Activated CD4-positive, alpha-beta T cell treated with anti-CD3 and anti-CD28 coated beads, Interleukin-2, amount 10 ng/mL, durations not matched to agents 24 days and 14 days (primary cell): ENCODE measurements at regions of chr1 and their contacts with region 1.

Region 1: GRCh38 chr1:221994274-221994698 is 252.4 kb upstream of the DUSP10 start:
- DNase-seq: peak; percentile 65
- H3K4me3 Mint-ChIP-seq: peak overlapping the region; percentile 23
- H3K27ac Mint-ChIP-seq: peak overlapping the region; percentile 92
- H3K4me1 Mint-ChIP-seq: peaks cover 26% of the 10 kb centered on the region
- H3K27me3 Mint-ChIP-seq: no peaks in the 10 kb centered on the region

Region 2: GRCh38 chr1:221637641-221638041 is 356.6 kb before region 1 on chr1:
- intact Hi-C with region 1: no loop called
- DNase-seq: no peak
- H3K4me3 Mint-ChIP-seq: no peak overlapping the region
- H3K27ac Mint-ChIP-seq: no peak overlapping the region
- H3K4me1 Mint-ChIP-seq: no peaks in the 10 kb centered on the region
- H3K27me3 Mint-ChIP-seq: peaks cover 2% of the 10 kb centered on the region

Region 3: DNA sequence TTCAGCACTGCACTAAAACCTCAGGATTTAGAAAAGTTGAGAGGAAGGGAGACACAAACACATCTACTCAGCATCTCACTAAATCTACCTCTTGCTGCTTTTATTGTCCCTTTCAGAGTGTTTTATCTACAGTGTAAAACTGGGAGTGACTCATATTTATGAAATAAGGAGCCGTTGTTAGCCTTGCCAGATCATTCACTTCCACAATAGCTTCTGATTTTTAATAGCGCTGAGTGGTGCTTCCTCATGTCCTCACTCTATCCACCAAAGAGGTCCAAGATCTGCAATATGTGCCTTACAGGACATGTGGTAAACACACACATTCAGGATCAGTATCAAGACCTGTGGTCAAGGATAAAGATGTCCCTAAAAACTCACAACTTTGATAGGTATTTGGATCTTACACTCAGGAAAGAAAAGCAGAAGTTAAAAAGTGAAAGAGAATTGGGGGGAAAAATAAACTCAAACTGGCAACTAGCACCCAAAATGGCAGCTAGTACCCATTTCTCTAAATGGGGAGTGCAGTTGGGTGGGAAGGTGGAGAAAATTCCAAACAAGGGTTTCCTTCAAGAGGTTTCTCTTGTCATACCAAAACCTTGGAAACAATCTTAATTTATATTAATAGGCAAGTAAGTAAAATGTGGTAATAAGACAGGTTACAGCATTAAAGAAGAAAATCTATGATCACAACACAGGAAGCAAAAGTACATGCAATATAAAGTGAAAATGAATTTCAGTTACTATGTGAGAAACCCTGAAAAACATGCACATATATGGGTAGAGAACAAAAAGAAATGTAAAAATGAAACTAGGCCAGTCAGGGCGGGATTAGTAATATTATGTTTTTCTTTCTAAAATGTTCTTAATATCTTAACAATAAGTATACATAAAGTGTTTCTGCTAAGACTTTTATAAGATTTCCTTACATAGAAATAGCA is 268.3 kb before region 1 on chr1:
- intact Hi-C with region 1: loop called (anchors 5 kb)
- DNase-seq: no peak
- H3K4me3 Mint-ChIP-seq: peak overlapping the region; percentile 65
- H3K27ac Mint-ChIP-seq: peak overlapping the region; percentile 93
- H3K4me1 Mint-ChIP-seq: peaks cover 71% of the 10 kb centered on the region
- H3K27me3 Mint-ChIP-seq: no peaks in the 10 kb centered on the region

Region 4: DNA sequence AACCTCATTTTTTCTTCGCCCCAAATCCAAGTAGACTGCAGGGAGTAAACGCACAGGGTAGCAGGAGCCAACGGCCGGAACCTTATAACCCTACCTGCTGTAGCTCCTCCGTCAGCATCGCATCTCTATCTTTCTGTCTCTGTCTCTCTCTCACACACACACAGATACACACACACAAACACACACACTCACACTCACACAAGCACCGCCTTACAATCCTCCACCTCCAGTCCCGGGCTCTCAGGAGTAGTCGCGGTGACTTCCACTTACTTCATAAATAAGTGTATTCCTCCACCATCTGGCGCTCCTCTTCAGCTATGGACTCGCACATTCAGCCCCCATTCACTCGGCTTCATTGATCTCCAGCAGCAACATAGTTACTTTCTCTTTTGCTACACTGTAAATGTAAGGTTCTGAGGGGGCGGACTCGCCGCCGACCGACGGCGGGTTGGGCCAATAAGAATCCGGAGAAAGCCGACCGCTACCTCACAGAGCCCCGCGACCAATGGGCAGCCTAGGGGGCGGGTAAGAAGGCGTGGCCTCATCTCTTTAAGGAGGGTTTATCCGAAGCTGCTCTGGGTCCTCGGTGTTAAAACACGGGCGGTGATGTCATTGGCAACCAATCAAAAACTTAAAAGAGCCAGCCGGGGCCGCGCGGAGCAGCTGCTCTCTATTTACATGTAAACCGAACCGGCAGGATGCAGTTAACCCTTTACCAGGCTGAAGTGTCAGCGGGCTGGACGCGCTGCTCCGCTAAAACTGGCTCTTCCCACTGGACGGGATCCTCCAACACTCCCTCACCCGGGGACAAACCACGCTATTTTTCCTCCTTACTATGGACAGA is 252.4 kb before region 1 on chr1 and contains the start of gene DUSP10:
- intact Hi-C with region 1: no loop called
- DNase-seq: peak; percentile 100
- H3K4me3 Mint-ChIP-seq: no peak within 1 kb of the TSS
- H3K27ac Mint-ChIP-seq: no peak within 1 kb of the TSS
- H3K4me1 Mint-ChIP-seq: peaks cover 34% of the 10 kb centered on the region
- H3K27me3 Mint-ChIP-seq: no peaks in the 10 kb centered on the region
- total RNA-seq, gene DUSP10: 13.5 and 14.6 TPM in 2 replicates

Region 5: DNA sequence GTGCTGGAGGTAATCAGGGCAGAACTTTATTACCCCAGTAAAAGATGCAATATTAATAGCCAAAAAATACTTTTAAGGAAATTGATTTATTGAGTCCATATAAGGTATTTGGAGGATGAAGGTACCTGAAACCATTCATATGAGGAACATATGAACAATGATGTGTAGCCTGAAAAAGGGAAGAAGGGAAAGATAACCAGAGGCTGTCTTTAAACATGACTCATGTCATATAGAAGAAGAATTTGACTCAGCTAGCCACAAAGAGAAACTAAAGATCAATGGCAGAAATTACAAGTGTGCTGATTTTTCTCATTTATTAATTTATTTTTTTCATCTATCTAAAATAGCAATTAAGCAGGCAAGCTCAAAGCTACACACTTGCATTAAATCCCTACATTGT is 116.2 kb before region 1 on chr1:
- intact Hi-C with region 1: loop called (anchors 5 kb)
- DNase-seq: no peak
- H3K4me3 Mint-ChIP-seq: no peak overlapping the region
- H3K27ac Mint-ChIP-seq: no peak overlapping the region
- H3K4me1 Mint-ChIP-seq: peaks cover 10% of the 10 kb centered on the region
- H3K27me3 Mint-ChIP-seq: peaks cover 2% of the 10 kb centered on the region

Region 6: DNA sequence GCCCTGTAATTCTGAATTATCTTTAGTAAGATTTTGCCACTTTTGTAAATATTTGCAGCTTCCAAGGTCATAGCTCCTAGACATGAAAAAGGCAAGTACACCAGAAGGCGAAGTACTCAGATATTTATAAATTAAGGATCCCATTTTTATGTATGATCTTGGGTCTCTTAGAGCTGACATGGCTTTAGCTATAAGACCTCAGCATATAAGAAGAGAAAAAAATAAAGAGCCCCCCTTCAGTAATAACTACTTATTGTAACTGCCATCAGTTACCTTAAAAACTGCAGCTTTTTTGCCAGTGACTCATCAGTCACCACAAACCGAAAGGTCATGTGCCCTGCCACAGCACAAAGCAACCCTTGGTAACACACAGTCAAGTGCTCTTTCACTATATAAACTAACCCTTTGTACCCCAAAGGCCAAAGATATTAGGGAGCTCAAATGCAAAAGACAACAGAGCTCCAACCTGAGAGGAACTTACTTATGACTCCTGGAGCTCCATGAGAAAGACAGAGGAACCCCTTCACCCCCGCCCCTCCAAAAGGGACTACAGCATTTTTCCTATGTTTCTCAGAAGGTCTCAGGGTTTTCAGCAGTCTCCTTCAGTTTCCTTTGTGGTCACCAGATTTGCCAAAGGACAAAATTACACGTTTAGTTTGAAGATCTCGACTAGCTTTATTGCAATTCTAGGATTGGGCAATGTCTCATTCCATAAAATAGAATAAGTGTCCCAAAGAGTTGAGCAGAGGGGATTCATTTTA is 32.6 kb before region 1 on chr1:
- intact Hi-C with region 1: loop called (anchors 1 kb)
- DNase-seq: peak; percentile 84
- H3K4me3 Mint-ChIP-seq: peak overlapping the region; percentile 29
- H3K27ac Mint-ChIP-seq: peak overlapping the region; percentile 42
- H3K4me1 Mint-ChIP-seq: peaks cover 18% of the 10 kb centered on the region
- H3K27me3 Mint-ChIP-seq: no peaks in the 10 kb centered on the region